ENCODE measurements at regions of chr10 and their contacts with region 1.

Region 1: GRCh38 chr10:103192451-103193106 is 493 bp downstream of the NT5C2 start:
- DNase-seq: peak in 1 of 2 experiments; percentile 77
- H3K4me3 ChIP-seq: peak overlapping the region; percentile 86 to 90 (median 88)
- H3K27ac ChIP-seq: peak overlapping the region; percentile 76
- H3K4me1 ChIP-seq: peaks cover 4 to 9% (median 7%) of the 10 kb centered on the region in 4 experiments; a peak in 6 of 7 replicates
- H3K27me3 ChIP-seq: peaks cover 0 to 6% (median 1%) of the 10 kb centered on the region in 4 experiments; a peak in 4 of 7 replicates
- CTCF ChIP-seq: no peak
- EP300 ChIP-seq: no peak
- POLR2A ChIP-seq: no peak
- RAD21 ChIP-seq: no peak

Region 2: DNA sequence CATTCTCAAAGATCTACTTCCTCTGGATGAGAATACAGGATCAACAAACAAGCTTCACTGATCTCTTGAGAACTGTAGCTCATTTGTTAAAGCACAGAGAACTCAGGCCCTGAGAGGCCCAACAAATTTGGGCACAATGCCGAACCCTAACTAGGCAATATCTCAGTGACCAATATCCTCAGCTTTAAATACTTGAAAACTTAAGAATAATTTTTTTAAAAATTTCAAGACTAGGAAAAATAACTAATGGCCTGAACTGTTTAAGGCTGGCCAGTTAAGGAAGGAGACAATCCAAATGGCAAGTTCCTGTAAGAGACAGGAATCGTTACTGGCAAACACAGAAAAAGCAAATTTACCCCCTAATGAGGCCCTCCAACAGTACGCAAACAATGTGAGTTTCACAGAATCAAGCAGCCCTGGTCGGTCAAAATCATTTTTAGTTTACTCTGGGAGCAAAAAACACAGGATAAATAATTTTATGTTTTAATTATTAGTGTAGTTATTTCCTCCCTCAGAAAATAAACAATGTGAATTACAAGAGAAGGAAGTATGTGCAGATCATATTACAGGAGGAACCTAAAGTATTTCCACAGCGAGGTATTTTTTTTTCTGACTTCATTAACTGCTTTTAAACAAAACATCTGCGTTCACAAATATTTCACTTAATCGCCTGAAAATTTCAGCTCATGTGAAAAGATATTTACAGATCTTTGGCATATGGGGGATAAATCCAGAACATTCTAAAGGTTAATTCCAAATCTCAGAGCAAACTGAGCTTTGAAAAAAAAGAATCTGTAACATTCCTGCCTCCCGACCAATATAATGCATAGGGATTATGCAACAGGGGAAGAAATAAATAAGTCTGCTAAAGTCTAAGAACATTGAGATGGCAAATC is 39.0 kb before region 1 on chr10:
- CTCF ChIA-PET with region 1: interaction called, 4 read pairs
- POLR2A ChIA-PET with region 1: interaction called, 10 read pairs
- DNase-seq: no peak
- H3K4me3 ChIP-seq: peak overlapping the region in 1 of 4 experiments; percentile 44; a peak in 1 of 8 replicates
- H3K27ac ChIP-seq: peak overlapping the region; percentile 48; the same call in 1 of the 2 replicates
- H3K4me1 ChIP-seq: peaks cover 0 to 4% (median 3%) of the 10 kb centered on the region in 4 experiments; a peak in 2 of 7 replicates
- H3K27me3 ChIP-seq: no peaks in the 10 kb centered on the region
- CTCF ChIP-seq: no peak
- EP300 ChIP-seq: no peak
- POLR2A ChIP-seq: no peak
- RAD21 ChIP-seq: no peak

Region 3: DNA sequence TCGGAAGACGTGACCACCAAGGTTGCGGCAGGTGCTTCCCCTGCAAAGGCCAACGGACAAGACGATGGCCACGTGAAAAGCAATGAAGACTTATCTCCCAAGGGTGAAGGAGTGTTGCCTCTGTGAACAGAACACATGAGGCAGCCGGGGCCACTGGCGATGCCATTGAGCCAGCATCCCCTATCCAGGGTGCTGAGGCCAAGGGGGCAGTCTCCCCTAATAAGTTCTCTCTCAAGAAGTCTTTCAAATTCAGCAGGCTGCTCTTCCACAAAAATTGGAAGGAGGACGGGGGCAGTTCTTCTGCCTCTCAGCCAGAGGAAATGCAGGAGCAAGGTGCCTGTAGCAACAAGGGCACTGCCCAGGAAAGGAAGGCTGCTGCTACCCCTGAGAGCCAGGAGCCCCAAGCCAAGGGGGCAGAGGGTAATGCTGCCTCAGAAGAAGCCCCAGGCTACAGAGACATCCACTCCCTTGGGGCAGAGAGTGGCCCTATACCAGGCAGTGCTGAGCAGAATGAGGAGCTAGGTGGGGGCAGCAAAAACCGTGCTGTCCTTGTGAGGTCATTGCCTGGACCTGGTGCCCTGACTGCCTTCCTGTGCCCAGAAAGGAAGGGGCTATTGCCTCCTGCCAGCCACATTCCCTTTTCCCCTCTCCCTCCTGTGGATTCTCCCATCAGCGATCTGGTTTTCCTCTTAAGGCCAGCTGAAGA is 16.8 kb before region 1 on chr10:
- CTCF ChIA-PET with region 1: interaction called, 5 read pairs
- POLR2A ChIA-PET with region 1: interaction called, 17 read pairs
- DNase-seq: peak in 1 of 2 experiments; percentile 47
- H3K4me3 ChIP-seq: no peak overlapping the region
- H3K27ac ChIP-seq: no peak overlapping the region
- H3K4me1 ChIP-seq: peaks cover 0 to 3% (median 1%) of the 10 kb centered on the region in 4 experiments; a peak in 1 of 7 replicates
- H3K27me3 ChIP-seq: no peaks in the 10 kb centered on the region
- CTCF ChIP-seq: no peak
- EP300 ChIP-seq: no peak
- POLR2A ChIP-seq: no peak
- RAD21 ChIP-seq: no peak; a peak in 1 of 4 replicates

Region 4: DNA sequence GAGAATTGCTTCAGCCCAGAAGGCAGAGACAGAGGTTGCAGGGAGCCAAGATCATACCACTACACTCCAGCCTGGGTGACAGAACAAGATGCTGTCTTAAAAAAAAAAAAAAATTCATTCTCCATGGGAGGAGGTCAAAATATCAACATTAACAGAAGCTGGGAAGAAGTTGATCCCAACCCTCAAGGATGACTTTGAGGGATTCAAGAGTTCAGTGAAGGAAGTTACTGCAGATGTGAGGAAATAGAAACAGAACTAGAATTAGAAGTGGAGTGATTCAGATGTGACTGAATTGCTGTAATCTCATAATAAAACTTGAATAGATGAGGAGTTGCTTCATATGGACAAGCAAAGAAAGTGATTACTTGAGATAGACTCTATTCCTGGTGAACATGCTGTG is 33.4 kb after region 1 on chr10:
- CTCF ChIA-PET with region 1: interaction called, 10 read pairs
- POLR2A ChIA-PET with region 1: interaction called, 25 read pairs
- DNase-seq: no peak
- H3K4me3 ChIP-seq: no peak overlapping the region
- H3K27ac ChIP-seq: no peak overlapping the region
- H3K4me1 ChIP-seq: peaks cover 0 to 5% (median 2%) of the 10 kb centered on the region in 4 experiments; a peak in 1 of 7 replicates
- H3K27me3 ChIP-seq: no peaks in the 10 kb centered on the region; a peak in 1 of 7 replicates
- CTCF ChIP-seq: no peak
- EP300 ChIP-seq: no peak
- POLR2A ChIP-seq: no peak
- RAD21 ChIP-seq: no peak

Region 5: GRCh38 chr10:103231047-103231551 is 38.5 kb after region 1 on chr10:
- CTCF ChIA-PET with region 1: interaction called, 10 read pairs
- POLR2A ChIA-PET with region 1: interaction called, 25 read pairs
- DNase-seq: peak in 1 of 2 experiments; percentile 85
- H3K4me3 ChIP-seq: no peak overlapping the region
- H3K27ac ChIP-seq: no peak overlapping the region; the same call in 1 of the 2 replicates
- H3K4me1 ChIP-seq: peaks cover 0 to 18% (median 2%) of the 10 kb centered on the region in 4 experiments; a peak in 3 of 7 replicates
- H3K27me3 ChIP-seq: no peaks in the 10 kb centered on the region; a peak in 1 of 7 replicates
- CTCF ChIP-seq: no peak
- EP300 ChIP-seq: peak in 1 of 2 experiments; percentile 80; a peak in 1 of 3 replicates
- POLR2A ChIP-seq: no peak
- RAD21 ChIP-seq: peak in 1 of 2 experiments; percentile 1; a peak in 1 of 4 replicates

Region 6: GRCh38 chr10:103396064-103396788 is 203.6 kb after region 1 on chr10 and contains the starts of genes ATP5MK and PDCD11:
- CTCF ChIA-PET with region 1: no interaction called
- POLR2A ChIA-PET with region 1: no interaction called
- DNase-seq: peak; percentile 85 to 91
- H3K4me3 ChIP-seq: peak within 1 kb of the TSS; percentile 96 to 99 (median 96)
- H3K27ac ChIP-seq: peak within 1 kb of the TSS; percentile 37
- H3K4me1 ChIP-seq: peaks cover 0 to 10% (median 2%) of the 10 kb centered on the region in 4 experiments; a peak in 6 of 7 replicates
- H3K27me3 ChIP-seq: no peaks in the 10 kb centered on the region
- CTCF ChIP-seq: peak in 1 of 3 experiments; percentile 17; a peak in 1 of 4 replicates
- EP300 ChIP-seq: no peak
- POLR2A ChIP-seq: peak; percentile 66 to 81
- RAD21 ChIP-seq: no peak
- total RNA-seq, gene ATP5MK: 312 and 339 TPM in 2 replicates
- total RNA-seq, gene PDCD11: 78.5 and 79.1 TPM in 2 replicates